ENCODE measurements at regions of chr20 and their contacts with region 1.

Region 1: GRCh38 chr20:21559305-21559704 is 45.4 kb upstream of the NKX2-2 start:
- DNase-seq: peak; percentile 77
- H3K4me3 Mint-ChIP-seq: peak overlapping the region; percentile 50
- H3K27ac Mint-ChIP-seq: peak overlapping the region; percentile 75
- H3K4me1 Mint-ChIP-seq: peaks cover 54% of the 10 kb centered on the region
- H3K27me3 Mint-ChIP-seq: peaks cover 4% of the 10 kb centered on the region

Region 2: GRCh38 chr20:19947611-19948264 is 1611.6 kb before region 1 on chr20:
- CTCF ChIA-PET with region 1: interaction called, 3 read pairs
- POLR2A ChIA-PET with region 1: no interaction called
- intact Hi-C with region 1: loop called (anchors 5 kb)
- DNase-seq: peak; percentile 28
- H3K4me3 Mint-ChIP-seq: no peak overlapping the region
- H3K27ac Mint-ChIP-seq: no peak overlapping the region
- H3K4me1 Mint-ChIP-seq: peaks cover 30% of the 10 kb centered on the region
- H3K27me3 Mint-ChIP-seq: peaks cover 2% of the 10 kb centered on the region

Region 3: DNA sequence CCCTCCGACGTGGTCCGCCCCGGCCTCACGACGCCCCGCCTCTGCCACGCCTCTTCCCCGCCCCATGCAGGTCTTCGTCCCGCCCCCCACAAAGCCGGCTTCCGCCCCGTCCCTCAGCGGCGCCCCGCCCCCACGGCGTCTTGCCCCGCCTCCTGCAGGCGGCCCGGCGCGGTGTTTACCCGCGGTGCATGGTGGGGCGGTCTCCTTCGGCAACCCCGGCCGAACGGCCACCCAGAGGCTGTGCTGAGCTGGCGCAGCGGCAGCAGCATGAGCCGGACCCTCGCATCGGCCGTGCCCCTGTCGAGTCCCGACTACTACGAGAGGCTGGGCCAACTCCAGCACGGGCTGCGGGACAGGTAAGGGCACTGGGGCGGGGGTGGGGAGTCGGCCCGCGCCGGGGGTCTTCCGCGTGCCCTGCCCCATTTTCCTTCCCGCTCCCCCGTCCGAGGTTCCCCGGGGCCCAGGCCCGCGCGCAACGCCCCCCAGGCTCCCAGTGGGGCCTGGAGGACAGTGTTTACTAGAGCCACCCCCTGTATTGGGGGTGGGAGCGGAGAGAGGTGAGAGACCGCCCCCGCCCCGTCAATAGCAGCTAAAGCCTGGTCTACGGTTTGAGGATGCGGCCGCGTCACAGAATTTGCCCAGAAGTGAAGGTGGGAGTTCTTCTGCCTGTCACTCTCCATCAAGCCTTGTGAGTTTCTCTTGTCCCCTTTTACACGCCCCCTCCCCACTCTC is 433.3 kb before region 1 on chr20 and contains the start of gene KIZ:
- CTCF ChIA-PET with region 1: no interaction called
- POLR2A ChIA-PET with region 1: no interaction called
- intact Hi-C with region 1: loop called (anchors 1 kb)
- DNase-seq: peak; percentile 98
- H3K4me3 Mint-ChIP-seq: peak within 1 kb of the TSS; percentile 81
- H3K27ac Mint-ChIP-seq: peak within 1 kb of the TSS; percentile 69
- H3K4me1 Mint-ChIP-seq: peaks cover 18% of the 10 kb centered on the region
- H3K27me3 Mint-ChIP-seq: peaks cover 3% of the 10 kb centered on the region
- total RNA-seq, gene KIZ: 13.3 to 13.5 TPM

Region 4: GRCh38 chr20:21529863-21530262 is 29.4 kb before region 1 on chr20:
- CTCF ChIA-PET with region 1: interaction called, 27 read pairs
- POLR2A ChIA-PET with region 1: no interaction called
- intact Hi-C with region 1: loop called (anchors 1 kb)
- DNase-seq: no peak
- H3K4me3 Mint-ChIP-seq: no peak overlapping the region
- H3K27ac Mint-ChIP-seq: no peak overlapping the region
- H3K4me1 Mint-ChIP-seq: peaks cover 6% of the 10 kb centered on the region
- H3K27me3 Mint-ChIP-seq: peaks cover 30% of the 10 kb centered on the region

Region 5: GRCh38 chr20:21571841-21572690 is 12.8 kb after region 1 on chr20:
- CTCF ChIA-PET with region 1: interaction called, 53 read pairs
- POLR2A ChIA-PET with region 1: interaction called, 6 read pairs
- intact Hi-C with region 1: loop called (anchors 1 kb)
- DNase-seq: peak; percentile 27
- H3K4me3 Mint-ChIP-seq: no peak overlapping the region
- H3K27ac Mint-ChIP-seq: no peak overlapping the region
- H3K4me1 Mint-ChIP-seq: peaks cover 11% of the 10 kb centered on the region
- H3K27me3 Mint-ChIP-seq: peaks cover 11% of the 10 kb centered on the region